CD8-positive, alpha-beta T cell (primary cell): ENCODE measurements at regions of chr22 and their contacts with region 1.

Region 1: GRCh38 chr22:46613606-46614021 is 6.6 kb upstream of the GRAMD4 start:
- DNase-seq: peak in 2 of 9 experiments; percentile 16 to 31
- ATAC-seq: no peak
- H3K4me3 ChIP-seq: peak overlapping the region; percentile 49 to 52
- H3K4me3 Mint-ChIP-seq: peak overlapping the region; percentile 90
- H3K27ac ChIP-seq: peak overlapping the region; percentile 20 to 51
- H3K27ac Mint-ChIP-seq: peak overlapping the region; percentile 90
- H3K4me1 ChIP-seq: peaks cover 25% of the 10 kb centered on the region
- H3K4me1 Mint-ChIP-seq: peaks cover 28% of the 10 kb centered on the region
- H3K27me3 ChIP-seq: no peaks in the 10 kb centered on the region
- H3K27me3 Mint-ChIP-seq: no peaks in the 10 kb centered on the region
- CTCF ChIP-seq: no peak

Region 2: DNA sequence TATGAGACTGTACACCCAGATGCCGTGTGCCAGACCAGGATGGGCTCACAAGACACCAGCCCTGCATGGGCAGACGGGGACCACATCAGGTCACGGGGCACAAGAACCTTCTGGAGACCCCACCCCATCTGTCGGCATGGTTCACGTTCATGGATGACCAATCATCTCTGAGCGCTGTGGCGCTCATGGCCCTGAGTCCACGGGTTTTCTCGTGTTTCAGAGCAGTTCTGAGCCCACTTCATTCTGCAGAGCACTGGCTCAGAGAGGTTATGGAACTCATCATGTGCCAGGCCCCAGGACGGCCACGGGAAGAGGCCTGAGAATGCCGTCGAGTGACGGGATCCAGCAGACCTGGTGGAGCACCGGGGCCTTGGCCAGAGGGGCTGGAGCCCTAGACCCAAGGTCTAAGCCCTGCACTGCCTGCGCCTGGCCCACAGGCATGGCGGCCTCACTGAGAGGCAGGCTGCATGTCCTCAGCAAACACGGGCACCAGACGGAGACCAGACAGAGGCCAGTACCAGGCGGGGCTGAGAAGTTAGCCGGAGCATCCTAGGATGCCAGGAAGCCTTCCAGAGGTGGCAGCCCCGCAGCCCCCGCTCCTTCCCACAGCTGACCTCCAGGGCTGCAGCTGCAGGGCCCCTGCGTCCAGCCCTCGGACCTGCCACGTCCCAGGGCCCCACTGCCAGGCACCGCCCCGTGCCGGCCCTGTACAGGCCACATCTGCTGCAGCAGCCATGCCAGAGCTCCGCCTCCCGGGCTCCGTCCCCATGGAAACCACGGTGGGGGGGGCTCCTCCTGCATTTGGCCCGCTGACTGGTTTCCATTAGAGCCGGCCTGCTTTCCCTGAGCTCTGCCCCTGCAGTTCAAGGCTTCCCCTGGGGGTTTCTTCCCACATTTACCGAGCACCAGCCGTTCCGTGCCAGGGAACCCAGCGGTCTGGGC is 526.0 kb before region 1 on chr22:
- CTCF ChIA-PET with region 1: no interaction called
- POLR2A ChIA-PET with region 1: no interaction called
- intact Hi-C with region 1: no loop called
- DNase-seq: no peak
- ATAC-seq: no peak
- H3K4me3 ChIP-seq: no peak overlapping the region
- H3K4me3 Mint-ChIP-seq: no peak overlapping the region
- H3K27ac ChIP-seq: no peak overlapping the region
- H3K27ac Mint-ChIP-seq: no peak overlapping the region
- H3K4me1 ChIP-seq: no peaks in the 10 kb centered on the region
- H3K4me1 Mint-ChIP-seq: peaks cover 6% of the 10 kb centered on the region
- H3K27me3 ChIP-seq: no peaks in the 10 kb centered on the region
- H3K27me3 Mint-ChIP-seq: no peaks in the 10 kb centered on the region
- CTCF ChIP-seq: no peak

Region 3: DNA sequence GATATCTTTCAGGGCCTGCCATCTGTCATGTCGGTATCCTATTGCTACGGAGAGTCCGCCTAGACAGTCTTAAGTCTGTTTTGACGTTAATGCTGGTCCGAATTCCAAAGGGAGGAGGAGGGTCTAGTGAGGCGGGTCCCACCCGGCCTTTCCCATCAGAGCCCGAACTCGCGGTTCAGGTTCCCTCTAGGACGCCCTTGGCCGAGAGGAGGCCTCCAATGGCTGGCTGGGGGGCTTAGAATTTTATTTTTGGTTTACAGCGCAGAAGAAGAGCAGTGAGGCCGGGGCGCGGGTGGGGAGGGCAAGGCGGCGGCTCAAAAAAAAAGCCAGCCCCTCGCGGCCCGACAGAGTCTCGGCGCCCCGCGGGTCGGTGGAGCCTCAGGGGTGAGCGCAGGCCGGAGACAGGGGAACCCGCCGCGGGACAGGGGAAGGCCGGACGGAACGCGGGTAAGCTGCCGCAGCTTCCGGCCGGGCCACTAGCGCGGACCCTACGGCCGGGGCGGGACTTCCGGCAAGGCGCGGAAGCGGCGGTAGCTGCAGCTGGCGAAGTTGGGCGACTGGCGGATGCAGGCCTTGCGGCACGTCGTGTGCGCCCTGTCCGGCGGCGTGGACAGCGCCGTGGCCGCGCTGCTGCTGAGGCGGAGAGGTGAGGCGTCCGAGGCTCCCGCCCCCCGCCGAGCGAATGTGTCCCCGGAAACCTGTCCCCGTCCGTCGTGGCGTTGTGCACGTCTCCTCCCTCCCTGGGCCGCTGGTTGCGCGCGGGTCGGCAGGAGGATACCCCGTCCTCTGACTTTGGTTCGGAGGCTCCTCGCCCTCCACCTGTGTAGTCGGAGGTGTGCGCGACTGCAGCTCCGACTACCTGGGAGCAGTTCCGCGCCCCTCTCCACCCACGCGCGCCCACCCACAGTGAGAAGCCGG is 278.2 kb before region 1 on chr22 and contains the start of gene TRMU:
- CTCF ChIA-PET with region 1: no interaction called
- POLR2A ChIA-PET with region 1: no interaction called
- intact Hi-C with region 1: no loop called
- DNase-seq: peak; percentile 29 to 86 (median 75)
- ATAC-seq: peak; percentile 80
- H3K4me3 ChIP-seq: peak within 1 kb of the TSS; percentile 80 to 94
- H3K4me3 Mint-ChIP-seq: peak within 1 kb of the TSS; percentile 95
- H3K27ac ChIP-seq: peak within 1 kb of the TSS; percentile 68 to 86
- H3K27ac Mint-ChIP-seq: peak within 1 kb of the TSS; percentile 91
- H3K4me1 ChIP-seq: peaks cover 16% of the 10 kb centered on the region
- H3K4me1 Mint-ChIP-seq: peaks cover 39% of the 10 kb centered on the region
- H3K27me3 ChIP-seq: no peaks in the 10 kb centered on the region
- H3K27me3 Mint-ChIP-seq: no peaks in the 10 kb centered on the region
- CTCF ChIP-seq: no peak
- total RNA-seq, gene TRMU: 51.0 to 56.3 TPM

Region 4: DNA sequence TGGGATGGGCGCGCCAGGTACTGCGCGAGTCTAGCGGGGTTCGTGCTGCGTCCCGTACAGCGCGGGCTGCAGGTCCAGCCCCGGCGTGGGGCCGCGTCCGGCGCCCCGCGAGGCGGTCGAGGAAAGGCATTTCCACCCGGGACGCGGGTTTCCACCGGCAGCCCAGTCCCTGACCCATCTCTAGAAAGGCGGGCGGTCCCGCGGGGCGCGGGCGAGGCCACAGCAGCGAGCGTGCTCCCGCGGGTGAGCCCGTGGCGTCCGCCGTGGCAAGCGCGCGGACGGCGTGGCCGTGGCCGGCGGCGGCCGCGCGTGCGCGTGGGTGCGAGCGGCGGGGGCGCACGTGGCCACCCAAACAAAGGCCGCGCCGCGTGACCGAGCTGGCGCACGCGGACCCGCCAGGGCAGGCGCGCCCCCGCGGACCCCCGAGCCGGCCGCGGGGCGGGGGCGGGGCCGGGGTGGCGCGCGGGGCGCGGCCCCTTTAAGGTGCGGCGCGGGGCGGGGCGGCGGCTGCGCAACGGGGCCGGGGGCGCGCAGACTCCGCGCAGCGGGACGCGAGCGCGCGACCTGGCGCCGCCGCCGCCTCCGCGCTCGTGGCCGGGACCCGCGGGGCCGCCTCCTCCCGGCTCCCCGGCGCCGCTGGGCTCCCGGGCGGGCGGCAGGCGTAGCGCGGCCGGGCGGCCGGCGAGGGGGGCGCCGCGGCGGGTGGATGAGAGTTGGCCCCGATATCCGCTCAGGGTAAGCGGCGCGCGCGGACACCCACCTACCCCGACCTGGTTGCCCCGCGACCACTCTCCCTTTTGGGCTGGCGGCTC is 36.9 kb before region 1 on chr22:
- CTCF ChIA-PET with region 1: no interaction called
- POLR2A ChIA-PET with region 1: no interaction called
- intact Hi-C with region 1: loop called (anchors 1 to 5 kb)
- DNase-seq: peak; percentile 24 to 88 (median 57)
- ATAC-seq: peak; percentile 79
- H3K4me3 ChIP-seq: peak overlapping the region; percentile 40 to 58
- H3K4me3 Mint-ChIP-seq: peak overlapping the region; percentile 85
- H3K27ac ChIP-seq: no peak overlapping the region
- H3K27ac Mint-ChIP-seq: peak overlapping the region; percentile 74
- H3K4me1 ChIP-seq: peaks cover 21% of the 10 kb centered on the region
- H3K4me1 Mint-ChIP-seq: peaks cover 39% of the 10 kb centered on the region
- H3K27me3 ChIP-seq: no peaks in the 10 kb centered on the region
- H3K27me3 Mint-ChIP-seq: no peaks in the 10 kb centered on the region
- CTCF ChIP-seq: no peak

Region 5: DNA sequence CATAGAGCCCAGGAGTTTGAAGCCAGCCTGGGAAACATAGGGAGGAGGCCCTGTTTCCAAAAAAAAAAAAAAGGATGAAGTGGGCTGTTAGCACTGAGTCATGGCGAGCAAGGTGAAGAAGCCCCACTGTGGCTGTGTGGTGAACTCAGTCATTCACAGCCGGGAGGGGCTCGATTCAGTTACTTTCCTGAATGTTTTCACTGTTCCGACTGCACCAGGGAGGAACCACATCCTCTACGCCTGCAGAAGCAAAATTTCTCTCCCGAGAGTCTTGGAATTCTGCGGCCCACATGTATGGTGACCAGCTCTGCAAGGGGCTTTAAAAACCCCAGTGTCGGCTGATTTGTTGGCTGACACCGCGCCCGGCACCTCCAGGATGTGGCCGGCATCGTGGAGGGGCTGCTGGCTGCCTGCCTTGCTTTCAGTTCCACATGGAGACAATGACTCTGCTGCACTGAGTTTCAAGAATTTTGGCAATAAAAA is 21.2 kb before region 1 on chr22:
- CTCF ChIA-PET with region 1: no interaction called
- POLR2A ChIA-PET with region 1: interaction called, 4 read pairs
- intact Hi-C with region 1: loop called (anchors 1 to 2 kb)
- DNase-seq: peak in 8 of 9 experiments; percentile 32 to 75 (median 54)
- ATAC-seq: peak; percentile 73
- H3K4me3 ChIP-seq: peak overlapping the region in 1 of 2 experiments; percentile 35
- H3K4me3 Mint-ChIP-seq: peak overlapping the region; percentile 76
- H3K27ac ChIP-seq: peak overlapping the region in 1 of 2 experiments; percentile 54
- H3K27ac Mint-ChIP-seq: peak overlapping the region; percentile 81
- H3K4me1 ChIP-seq: peaks cover 22% of the 10 kb centered on the region
- H3K4me1 Mint-ChIP-seq: peaks cover 22% of the 10 kb centered on the region
- H3K27me3 ChIP-seq: no peaks in the 10 kb centered on the region
- H3K27me3 Mint-ChIP-seq: no peaks in the 10 kb centered on the region
- CTCF ChIP-seq: no peak

Region 6: DNA sequence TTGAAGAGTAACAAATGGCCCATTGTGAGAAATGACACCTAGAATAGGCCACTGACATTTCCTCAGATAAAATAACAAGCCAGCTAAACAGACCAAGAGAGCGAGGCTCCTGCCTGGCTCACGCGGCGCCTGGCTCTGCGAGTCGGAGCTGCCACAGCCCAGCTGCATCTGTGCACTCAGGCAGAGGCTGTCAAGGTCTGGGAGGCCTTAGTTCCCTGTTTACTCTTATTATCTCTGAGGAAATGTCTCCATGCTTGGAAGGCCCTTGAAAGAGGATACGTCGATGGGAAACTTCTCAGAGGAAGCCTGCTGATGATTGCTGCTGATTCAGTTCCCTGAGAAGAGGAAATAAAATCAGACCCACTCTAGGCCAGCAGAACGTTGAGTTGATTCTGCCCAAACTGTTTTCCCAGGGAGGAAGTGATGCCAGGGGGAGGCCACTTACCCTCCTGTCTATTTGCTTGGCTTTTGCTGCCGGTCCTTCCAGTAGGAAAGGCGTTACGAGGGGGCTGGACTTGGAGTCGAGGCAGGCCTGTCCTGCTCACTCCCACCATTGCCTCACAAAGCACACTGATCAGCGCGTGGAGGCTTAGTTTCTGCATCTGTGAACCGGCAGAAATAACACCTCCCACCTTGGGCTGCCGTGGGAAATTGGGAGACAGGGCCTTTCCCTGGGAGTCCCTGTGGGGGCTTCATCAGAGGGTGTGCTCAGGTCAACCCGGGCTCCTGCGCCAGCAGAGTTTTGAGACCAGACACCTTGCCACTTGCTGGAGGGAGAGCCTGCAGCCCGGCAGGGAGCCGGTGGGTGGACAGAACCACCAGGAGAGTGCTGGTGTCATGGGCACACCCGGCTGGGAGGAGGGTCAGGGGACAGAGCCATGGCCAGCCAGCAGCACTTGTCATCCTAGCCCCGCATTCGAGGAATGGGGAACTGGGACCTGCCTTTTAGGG is 357.8 kb after region 1 on chr22:
- CTCF ChIA-PET with region 1: no interaction called
- POLR2A ChIA-PET with region 1: no interaction called
- intact Hi-C with region 1: no loop called
- DNase-seq: no peak
- ATAC-seq: no peak
- H3K4me3 ChIP-seq: no peak overlapping the region
- H3K4me3 Mint-ChIP-seq: no peak overlapping the region
- H3K27ac ChIP-seq: no peak overlapping the region
- H3K27ac Mint-ChIP-seq: no peak overlapping the region
- H3K4me1 ChIP-seq: no peaks in the 10 kb centered on the region
- H3K4me1 Mint-ChIP-seq: peaks cover 25% of the 10 kb centered on the region
- H3K27me3 ChIP-seq: no peaks in the 10 kb centered on the region
- H3K27me3 Mint-ChIP-seq: no peaks in the 10 kb centered on the region
- CTCF ChIP-seq: no peak